MCF 10A (cell line): ENCODE measurements at regions of chr20 and their contacts with region 1.

Region 1: GRCh38 chr20:35741892-35742740 is at the start of gene RBM39:
- DNase-seq: peak; percentile 100
- H3K4me3 Mint-ChIP-seq: peak within 1 kb of the TSS; percentile 97
- H3K27ac Mint-ChIP-seq: peak within 1 kb of the TSS; percentile 98
- H3K4me1 Mint-ChIP-seq: peaks cover 23% of the 10 kb centered on the region
- H3K27me3 Mint-ChIP-seq: no peaks in the 10 kb centered on the region
- CTCF ChIP-seq: peak; percentile 14
- total RNA-seq, gene RBM39: 380 and 438 TPM in 2 replicates

Region 2: GRCh38 chr20:35664544-35665221 is 77.4 kb before region 1 on chr20 and contains the starts of genes CPNE1 and RBM12:
- CTCF ChIA-PET with region 1: no interaction called
- POLR2A ChIA-PET with region 1: interaction called, 71 read pairs
- intact Hi-C with region 1: no loop called
- DNase-seq: peak; percentile 90
- H3K4me3 Mint-ChIP-seq: peak within 1 kb of the TSS; percentile 94
- H3K27ac Mint-ChIP-seq: peak within 1 kb of the TSS; percentile 98
- H3K4me1 Mint-ChIP-seq: peaks cover 19% of the 10 kb centered on the region
- H3K27me3 Mint-ChIP-seq: no peaks in the 10 kb centered on the region
- CTCF ChIP-seq: no peak
- total RNA-seq, gene CPNE1: 161 and 194 TPM in 2 replicates
- total RNA-seq, gene RBM12: 60.1 and 64.3 TPM in 2 replicates

Region 3: DNA sequence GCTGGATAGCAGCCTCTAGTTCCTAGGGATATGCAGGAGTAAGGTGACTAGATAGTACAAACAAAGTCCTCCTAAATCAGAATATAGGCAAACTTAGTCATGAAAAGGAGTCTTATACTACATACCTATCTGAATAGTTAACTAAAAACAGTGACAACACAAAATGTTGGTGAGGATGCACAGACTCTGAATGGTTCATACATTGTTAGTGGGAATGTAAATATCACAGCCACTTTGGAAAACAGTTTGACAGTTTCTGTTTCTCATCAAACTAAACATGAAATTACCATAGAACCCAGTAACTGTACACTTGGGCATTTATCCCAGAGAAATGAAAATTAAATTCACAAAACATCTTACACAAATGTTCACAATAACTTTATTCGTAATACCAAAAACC is 60.2 kb before region 1 on chr20:
- CTCF ChIA-PET with region 1: no interaction called
- POLR2A ChIA-PET with region 1: no interaction called
- intact Hi-C with region 1: no loop called
- DNase-seq: no peak
- H3K4me3 Mint-ChIP-seq: no peak overlapping the region
- H3K27ac Mint-ChIP-seq: no peak overlapping the region
- H3K4me1 Mint-ChIP-seq: no peaks in the 10 kb centered on the region
- H3K27me3 Mint-ChIP-seq: no peaks in the 10 kb centered on the region
- CTCF ChIP-seq: no peak

Region 4: GRCh38 chr20:35718972-35719635 is 23.0 kb before region 1 on chr20:
- CTCF ChIA-PET with region 1: interaction called, 4 read pairs
- POLR2A ChIA-PET with region 1: interaction called, 39 read pairs
- intact Hi-C with region 1: no loop called
- DNase-seq: no peak
- H3K4me3 Mint-ChIP-seq: no peak overlapping the region
- H3K27ac Mint-ChIP-seq: no peak overlapping the region
- H3K4me1 Mint-ChIP-seq: peaks cover 6% of the 10 kb centered on the region
- H3K27me3 Mint-ChIP-seq: no peaks in the 10 kb centered on the region
- CTCF ChIP-seq: no peak

Region 5: GRCh38 chr20:35771689-35772562 is 29.8 kb after region 1 on chr20 and contains the start of gene PHF20:
- CTCF ChIA-PET with region 1: interaction called, 49 read pairs
- POLR2A ChIA-PET with region 1: interaction called, 617 read pairs
- intact Hi-C with region 1: loop called (anchors 1 kb)
- DNase-seq: peak; percentile 92
- H3K4me3 Mint-ChIP-seq: peak within 1 kb of the TSS; percentile 91
- H3K27ac Mint-ChIP-seq: peak within 1 kb of the TSS; percentile 97
- H3K4me1 Mint-ChIP-seq: peaks cover 51% of the 10 kb centered on the region
- H3K27me3 Mint-ChIP-seq: no peaks in the 10 kb centered on the region
- CTCF ChIP-seq: no peak
- total RNA-seq, gene PHF20: 64.2 and 74.7 TPM in 2 replicates

Region 6: GRCh38 chr20:35854713-35855434 is 112.8 kb after region 1 on chr20:
- CTCF ChIA-PET with region 1: no interaction called
- POLR2A ChIA-PET with region 1: interaction called, 12 read pairs
- intact Hi-C with region 1: no loop called
- DNase-seq: peak; percentile 47
- H3K4me3 Mint-ChIP-seq: no peak overlapping the region
- H3K27ac Mint-ChIP-seq: peak overlapping the region; percentile 27
- H3K4me1 Mint-ChIP-seq: peaks cover 23% of the 10 kb centered on the region
- H3K27me3 Mint-ChIP-seq: no peaks in the 10 kb centered on the region
- CTCF ChIP-seq: no peak

Region 7: GRCh38 chr20:35893942-35894341 is 151.8 kb after region 1 on chr20:
- CTCF ChIA-PET with region 1: interaction called, 3 read pairs
- POLR2A ChIA-PET with region 1: interaction called, 326 read pairs
- intact Hi-C with region 1: no loop called
- DNase-seq: no peak
- H3K4me3 Mint-ChIP-seq: no peak overlapping the region
- H3K27ac Mint-ChIP-seq: no peak overlapping the region
- H3K4me1 Mint-ChIP-seq: peaks cover 9% of the 10 kb centered on the region
- H3K27me3 Mint-ChIP-seq: no peaks in the 10 kb centered on the region
- CTCF ChIP-seq: no peak